ENCODE measurements at regions of chr15 and their contacts with region 1.

Region 1: DNA sequence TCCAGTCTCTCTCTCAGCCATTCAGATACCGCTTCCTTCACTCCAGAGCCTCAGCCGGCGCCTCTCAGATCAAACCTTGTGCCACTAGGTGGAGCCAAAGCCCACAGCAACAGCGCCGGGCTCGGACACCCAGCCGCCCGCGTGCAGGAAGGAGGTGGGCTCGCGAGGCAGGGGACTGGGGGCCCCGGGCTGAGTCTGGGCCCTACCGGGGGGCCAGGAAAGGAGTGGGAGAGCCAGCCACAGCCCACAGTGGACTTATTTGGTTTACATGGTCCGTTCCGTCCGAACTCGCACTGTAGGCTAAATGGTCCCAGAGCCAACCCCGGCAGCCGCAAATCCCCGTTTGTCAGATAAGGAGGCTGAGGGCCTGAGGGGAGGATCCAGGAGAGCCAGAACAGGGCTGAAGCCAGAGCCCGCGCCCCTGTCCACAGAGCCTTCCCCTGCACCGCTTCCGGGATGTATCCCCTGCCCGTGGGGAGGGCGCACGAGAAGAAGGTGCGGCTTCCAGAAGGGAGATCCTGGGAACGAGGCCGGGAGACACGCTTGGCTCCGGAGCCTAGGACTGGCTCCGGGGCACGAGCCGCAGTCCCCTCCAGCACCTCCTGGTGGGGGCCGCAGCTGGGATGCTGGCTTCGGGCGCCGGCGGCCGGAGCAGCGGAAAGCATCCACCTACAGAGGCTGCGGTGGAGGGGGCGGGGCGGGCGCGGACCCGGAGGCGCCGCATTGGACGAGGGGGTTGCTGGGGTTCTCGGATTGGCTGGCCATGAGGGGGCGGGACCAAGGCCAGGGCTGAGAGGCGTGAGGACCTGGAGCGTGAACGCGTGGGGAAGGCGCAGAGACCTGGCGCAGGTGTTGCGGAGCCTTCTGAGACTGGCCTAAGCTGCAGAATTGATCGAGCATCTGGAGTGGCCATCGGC is 6.5 kb upstream of the CYP11A1 start:
- DNase-seq: peak; percentile 91 to 95 (median 93)
- ATAC-seq: peak; percentile 97
- H3K4me3 ChIP-seq: peak overlapping the region; percentile 58 to 63 (median 62)
- H3K27ac ChIP-seq: no peak overlapping the region
- H3K4me1 ChIP-seq: peaks cover 0 to 17% (median 4%) of the 10 kb centered on the region in 4 donors
- H3K27me3 ChIP-seq: no peaks in the 10 kb centered on the region
- CTCF ChIP-seq: peak; percentile 83 to 93 (median 87)
- POLR2A ChIP-seq: no peak

Region 2: GRCh38 chr15:74489518-74490338 is 115.7 kb after region 1 on chr15:
- intact Hi-C with region 1: loop called in 1 of 2 experiments (anchors 5 kb)
- DNase-seq: peak; percentile 46 to 59 (median 54)
- ATAC-seq: peak; percentile 87 to 91 (median 90)
- H3K4me3 ChIP-seq: no peak overlapping the region
- H3K27ac ChIP-seq: no peak overlapping the region
- H3K4me1 ChIP-seq: no peaks in the 10 kb centered on the region
- H3K27me3 ChIP-seq: no peaks in the 10 kb centered on the region
- CTCF ChIP-seq: peak; percentile 31 to 70 (median 64)
- POLR2A ChIP-seq: no peak

Region 3: DNA sequence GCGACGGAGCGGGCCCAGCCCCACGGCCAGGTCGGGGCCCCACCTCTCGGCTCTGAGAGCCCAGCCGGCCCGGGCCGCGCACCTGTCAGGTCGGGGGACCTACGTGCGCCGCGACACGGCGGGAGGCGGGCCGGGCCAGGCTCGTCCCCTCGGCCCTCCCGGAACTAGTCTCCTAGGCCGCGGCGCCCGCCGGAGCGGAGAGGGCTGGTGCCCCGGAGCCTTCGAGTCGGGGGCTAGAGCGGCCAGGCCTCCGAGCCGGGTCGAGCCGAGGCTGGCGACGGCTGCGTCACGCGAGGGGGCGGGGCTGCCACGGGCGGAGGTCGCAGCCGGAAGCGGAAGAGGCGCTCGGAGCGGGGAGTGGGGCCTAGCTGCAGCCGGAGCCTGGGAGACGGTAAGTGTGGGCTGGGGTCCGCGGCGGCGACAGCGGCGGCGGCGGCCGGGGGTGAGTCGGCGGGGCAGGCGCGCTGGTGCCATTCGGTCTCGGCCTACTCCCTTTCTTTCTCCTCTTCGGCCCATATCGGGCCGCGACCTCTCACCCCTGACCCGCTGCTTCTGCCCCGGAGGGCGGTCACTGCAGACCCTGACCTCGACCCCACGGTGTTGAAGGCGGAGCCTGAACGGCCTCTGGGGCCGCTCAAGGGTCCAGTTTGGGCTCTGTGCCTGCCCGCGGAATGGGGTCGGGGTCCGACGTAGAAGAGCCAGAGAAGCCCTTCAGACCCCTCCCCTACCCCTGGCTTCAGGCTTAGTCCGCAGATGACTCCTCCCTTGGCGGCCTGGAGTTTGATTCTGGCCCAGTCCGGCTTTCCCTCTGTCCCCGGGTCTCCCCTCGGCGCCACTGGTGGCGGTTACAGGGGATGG is 241.7 kb after region 1 on chr15 and contains the start of gene CLK3:
- intact Hi-C with region 1: loop called in 1 of 2 experiments (anchors 10 kb)
- DNase-seq: peak; percentile 98 to 99 (median 98)
- ATAC-seq: peak; percentile 82 to 89 (median 86)
- H3K4me3 ChIP-seq: peak within 1 kb of the TSS; percentile 94 to 99 (median 98)
- H3K27ac ChIP-seq: peak within 1 kb of the TSS; percentile 91 to 99 (median 92)
- H3K4me1 ChIP-seq: peaks cover 0 to 27% (median 5%) of the 10 kb centered on the region in 4 donors
- H3K27me3 ChIP-seq: no peaks in the 10 kb centered on the region
- CTCF ChIP-seq: no peak
- POLR2A ChIP-seq: peak; percentile 87
- total RNA-seq, gene CLK3: 27.8 to 44.1 (median 33.2) TPM

Region 4: GRCh38 chr15:74635228-74635627 is 261.2 kb after region 1 on chr15:
- intact Hi-C with region 1: loop called in 1 of 2 experiments (anchors 10 kb)
- DNase-seq: peak in 2 of 3 donors; percentile 63 to 65
- ATAC-seq: peak; percentile 71 to 75 (median 74)
- H3K4me3 ChIP-seq: no peak overlapping the region
- H3K27ac ChIP-seq: no peak overlapping the region
- H3K4me1 ChIP-seq: peaks cover 0 to 11% (median 5%) of the 10 kb centered on the region in 4 donors
- H3K27me3 ChIP-seq: no peaks in the 10 kb centered on the region
- CTCF ChIP-seq: peak; percentile 82 to 94 (median 88)
- POLR2A ChIP-seq: no peak

Measured in right lobe of liver (tissue), 6 donors.